ENCODE measurements at regions of chr2 and their contacts with region 1.

Region 1: GRCh38 chr2:156077041-156077735 is 255.3 kb downstream of the NR4A2 start:
- DNase-seq: no peak
- ATAC-seq: no peak
- H3K4me3 Mint-ChIP-seq: no peak overlapping the region
- H3K27ac Mint-ChIP-seq: no peak overlapping the region
- H3K4me1 Mint-ChIP-seq: no peaks in the 10 kb centered on the region
- H3K27me3 Mint-ChIP-seq: no peaks in the 10 kb centered on the region

Region 2: GRCh38 chr2:156087875-156088274 is 10.7 kb after region 1 on chr2:
- CTCF ChIA-PET with region 1: no interaction called
- POLR2A ChIA-PET with region 1: no interaction called
- intact Hi-C with region 1: loop called in 1 of 2 experiments (anchors 1 kb)
- DNase-seq: no peak
- ATAC-seq: no peak
- H3K4me3 Mint-ChIP-seq: no peak overlapping the region
- H3K27ac Mint-ChIP-seq: no peak overlapping the region
- H3K4me1 Mint-ChIP-seq: no peaks in the 10 kb centered on the region
- H3K27me3 Mint-ChIP-seq: peaks cover 3% of the 10 kb centered on the region

Measured in activated CD4-positive, alpha-beta T cell treated with anti-CD3 and anti-CD28 coated beads for 36 hours (primary cell).